ENCODE measurements at regions of chr6 and their contacts with region 1.

Region 1: DNA sequence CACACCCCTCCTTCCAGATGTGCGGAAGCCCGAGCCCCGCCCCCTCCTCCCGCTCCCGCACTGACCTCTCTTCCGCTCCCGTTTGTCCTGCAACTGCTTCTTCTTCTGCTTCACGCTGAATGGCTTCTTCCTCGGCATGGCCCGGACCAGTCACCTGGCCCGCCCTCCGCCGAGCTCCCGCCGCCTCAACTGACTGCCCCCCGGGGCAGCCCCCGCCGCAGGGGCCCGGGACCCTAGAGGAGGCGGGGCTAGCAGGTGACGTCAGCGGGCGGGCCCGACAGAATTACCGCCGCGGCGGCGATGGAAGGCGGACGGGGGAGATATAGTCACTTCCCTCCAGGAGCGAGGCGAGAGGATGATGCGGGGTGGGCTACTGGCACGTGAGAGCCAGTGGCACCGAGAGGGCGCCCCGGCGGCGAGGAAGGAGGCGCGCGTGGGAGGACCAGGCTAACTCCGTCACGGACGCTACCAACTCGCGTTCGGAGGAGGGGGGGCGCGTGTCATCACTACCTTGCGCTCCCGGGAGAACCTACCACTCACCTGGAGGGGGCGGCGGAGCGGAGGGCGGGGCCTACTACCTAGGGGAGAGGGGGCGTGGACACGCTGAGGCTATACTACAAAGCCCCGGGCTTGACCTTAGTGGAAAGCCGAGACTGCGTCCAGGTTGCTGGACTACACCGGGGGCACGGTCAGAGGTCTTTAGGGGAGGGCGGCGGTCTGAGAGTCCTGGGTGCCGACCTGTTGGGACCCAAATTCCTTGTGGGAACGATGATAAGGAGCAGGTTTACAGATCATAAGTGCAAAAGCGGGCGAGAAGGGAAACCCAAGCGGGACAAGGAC is at the start of gene GNL1:
- DNase-seq: peak; percentile 80 to 95
- ATAC-seq: peak; percentile 82 to 91
- H3K4me3 ChIP-seq: peak within 1 kb of the TSS; percentile 88
- H3K27ac ChIP-seq: peak within 1 kb of the TSS; percentile 91 to 94
- H3K4me1 ChIP-seq: peaks cover 13% of the 10 kb centered on the region; the same call in 2 of the 3 replicates
- CTCF ChIP-seq: no peak
- EP300 ChIP-seq: no peak
- POLR2A ChIP-seq: no peak
- RAD21 ChIP-seq: no peak
- polyA plus RNA-seq, gene GNL1: 18.5 and 25.6 TPM in 2 replicates

Region 2: GRCh38 chr6:30571075-30571768 is 14.9 kb after region 1 on chr6 and contains the start of gene ABCF1:
- CTCF ChIA-PET with region 1: no interaction called
- POLR2A ChIA-PET with region 1: interaction called, 15 read pairs
- DNase-seq: peak; percentile 89 to 96
- ATAC-seq: peak; percentile 95 to 97
- H3K4me3 ChIP-seq: peak within 1 kb of the TSS; percentile 52
- H3K27ac ChIP-seq: peak within 1 kb of the TSS; percentile 89 to 99
- H3K4me1 ChIP-seq: peaks cover 14% of the 10 kb centered on the region
- CTCF ChIP-seq: no peak
- EP300 ChIP-seq: no peak
- POLR2A ChIP-seq: peak; percentile 67
- RAD21 ChIP-seq: no peak
- polyA plus RNA-seq, gene ABCF1: 30.2 and 31.0 TPM in 2 replicates

Region 3: DNA sequence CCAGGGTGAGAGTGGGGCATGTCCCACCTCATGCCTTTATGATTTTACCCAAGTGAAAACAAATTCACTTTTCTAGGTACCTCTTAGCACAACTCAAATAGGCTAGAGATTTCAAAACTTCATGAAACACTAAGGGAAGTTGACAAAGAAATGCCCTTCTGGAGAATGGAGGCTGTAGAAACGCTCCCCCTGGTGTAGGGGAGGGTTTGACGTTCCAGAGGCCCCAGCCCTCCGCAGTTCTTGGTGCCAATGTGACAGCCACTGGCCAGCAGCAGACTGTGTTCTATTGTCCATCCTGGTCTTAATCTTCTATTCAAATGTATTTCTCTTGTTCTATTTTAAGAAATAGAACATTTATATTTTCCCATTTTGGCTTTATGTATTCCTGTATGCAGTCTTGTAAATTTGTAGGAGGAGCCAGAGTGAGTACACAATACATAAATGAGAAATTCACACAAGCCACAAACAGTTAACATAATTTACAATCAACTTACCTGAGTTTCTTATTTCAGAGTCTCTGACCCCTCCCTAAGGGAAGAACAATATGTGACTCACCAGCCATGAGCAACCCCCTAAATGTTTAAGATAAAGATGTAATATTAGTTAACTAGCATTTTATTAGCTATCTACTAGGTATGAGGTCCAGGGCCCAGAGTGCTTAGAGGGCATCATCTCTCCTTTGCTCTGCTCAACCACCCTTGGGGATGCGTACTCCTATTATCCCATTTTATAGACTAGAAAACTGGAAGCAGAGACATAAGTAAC is 418.4 kb after region 1 on chr6:
- CTCF ChIA-PET with region 1: no interaction called
- POLR2A ChIA-PET with region 1: no interaction called
- DNase-seq: no peak
- ATAC-seq: no peak
- H3K4me3 ChIP-seq: no peak overlapping the region
- H3K27ac ChIP-seq: no peak overlapping the region
- H3K4me1 ChIP-seq: no peaks in the 10 kb centered on the region
- CTCF ChIP-seq: no peak
- EP300 ChIP-seq: no peak
- POLR2A ChIP-seq: no peak
- RAD21 ChIP-seq: no peak